PC-3 (cell line): ENCODE measurements at regions of chr5 and their contacts with region 1.

Region 1: GRCh38 chr5:34915139-34915855 is at the starts of genes BRIX1 and RAD1:
- DNase-seq: peak; percentile 97
- ATAC-seq: peak; percentile 99
- H3K4me3 ChIP-seq: peak within 1 kb of the TSS; percentile 88
- H3K27ac ChIP-seq: peak within 1 kb of the TSS; percentile 73
- H3K4me1 ChIP-seq: peaks cover 29% of the 10 kb centered on the region
- H3K27me3 ChIP-seq: no peaks in the 10 kb centered on the region
- CTCF ChIP-seq: no peak
- total RNA-seq, gene BRIX1: 49.0 and 63.2 TPM in 2 replicates
- total RNA-seq, gene RAD1: 22.5 and 62.5 TPM in 2 replicates

Region 2: GRCh38 chr5:34007621-34008600 is 907.4 kb before region 1 on chr5 and contains the start of gene AMACR:
- CTCF ChIA-PET with region 1: no interaction called
- POLR2A ChIA-PET with region 1: no interaction called
- intact Hi-C with region 1: loop called (anchors 10 kb)
- DNase-seq: peak; percentile 97
- ATAC-seq: peak; percentile 90
- H3K4me3 ChIP-seq: peak within 1 kb of the TSS; percentile 82
- H3K27ac ChIP-seq: peak within 1 kb of the TSS; percentile 74
- H3K4me1 ChIP-seq: peaks cover 28% of the 10 kb centered on the region
- H3K27me3 ChIP-seq: no peaks in the 10 kb centered on the region
- CTCF ChIP-seq: no peak
- total RNA-seq, gene AMACR: 12.3 and 12.7 TPM in 2 replicates

Region 3: DNA sequence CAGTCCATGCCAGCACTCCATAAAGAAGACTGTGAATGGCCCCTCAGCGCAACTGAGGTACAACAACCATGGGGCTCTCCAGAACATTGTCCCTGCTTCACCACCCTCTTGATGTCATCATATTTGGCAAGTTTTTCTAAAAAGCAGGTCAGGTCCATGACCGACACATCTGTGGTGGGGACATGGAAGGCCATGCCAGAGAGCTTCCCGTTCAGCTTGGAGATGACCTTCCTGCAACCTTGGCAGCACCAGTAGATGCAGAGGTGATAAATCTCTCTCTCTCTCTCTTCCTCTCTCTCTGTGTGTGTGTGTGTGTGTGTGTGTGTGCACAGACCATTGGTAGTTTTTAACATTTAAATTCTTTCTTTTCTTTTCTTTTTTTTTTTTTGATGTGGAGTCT is 167.9 kb after region 1 on chr5:
- CTCF ChIA-PET with region 1: no interaction called
- POLR2A ChIA-PET with region 1: no interaction called
- intact Hi-C with region 1: no loop called
- DNase-seq: no peak
- ATAC-seq: no peak
- H3K4me3 ChIP-seq: no peak overlapping the region
- H3K27ac ChIP-seq: no peak overlapping the region
- H3K4me1 ChIP-seq: no peaks in the 10 kb centered on the region
- H3K27me3 ChIP-seq: peaks cover 35% of the 10 kb centered on the region
- CTCF ChIP-seq: no peak